ENCODE measurements at regions of chr19 and their contacts with region 1.

Region 1: DNA sequence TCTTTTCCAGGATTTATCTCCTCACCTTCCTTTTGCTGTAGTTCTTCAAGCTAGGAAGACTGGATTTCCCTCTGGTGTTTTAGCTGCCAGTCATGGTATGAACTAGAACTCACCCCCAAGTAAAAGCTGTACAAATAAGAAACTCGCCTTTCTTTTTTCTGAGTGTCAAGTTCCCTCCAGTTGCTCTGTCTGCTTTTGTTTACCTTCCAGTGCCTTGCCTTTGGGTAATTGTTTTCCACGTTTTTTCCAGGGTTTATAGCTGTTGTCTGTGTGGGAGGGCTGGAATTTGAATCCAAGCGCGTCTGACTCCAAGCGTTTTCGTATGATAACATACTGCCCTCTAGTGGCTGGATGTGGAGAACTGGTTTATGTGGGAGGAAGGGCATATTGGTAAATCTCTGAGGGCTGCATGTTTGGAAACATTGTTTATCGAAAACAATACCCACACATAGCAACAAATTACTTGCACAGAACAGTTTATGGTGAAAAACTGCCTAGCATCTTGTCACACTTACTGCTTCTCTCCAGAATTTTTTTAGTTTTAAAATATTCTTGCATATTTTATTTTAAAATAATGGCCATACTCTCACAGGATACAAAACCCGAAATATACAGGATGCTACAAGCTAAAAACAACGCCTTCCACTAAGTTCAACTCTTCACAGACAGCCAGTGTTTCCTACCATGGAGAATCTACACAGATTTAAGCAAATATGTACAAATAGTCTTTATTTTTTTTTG is 19.2 kb downstream of the RCN3 start:
- DNase-seq: peak; percentile 67 to 86
- H3K4me3 ChIP-seq: peak overlapping the region; percentile 32; the same call in 1 of the 2 replicates
- H3K27ac ChIP-seq: no peak overlapping the region
- H3K4me1 ChIP-seq: peaks cover 11% of the 10 kb centered on the region
- H3K27me3 ChIP-seq: 0 out of 2 replicates have a peak, but pooled peaks cover 5% of the 10 kb centered on the region
- CTCF ChIP-seq: peak; percentile 94

Region 2: GRCh38 chr19:49085020-49085867 is 461.8 kb before region 1 on chr19 and contains the start of gene SNRNP70:
- CTCF ChIA-PET with region 1: interaction called, 13 read pairs
- POLR2A ChIA-PET with region 1: no interaction called
- intact Hi-C with region 1: no loop called
- DNase-seq: peak; percentile 97 to 100
- H3K4me3 ChIP-seq: peak within 1 kb of the TSS; percentile 77
- H3K27ac ChIP-seq: peak within 1 kb of the TSS; percentile 41
- H3K4me1 ChIP-seq: peaks cover 15% of the 10 kb centered on the region
- H3K27me3 ChIP-seq: no peaks in the 10 kb centered on the region
- CTCF ChIP-seq: 0 out of 2 replicates have a peak, but pooled peaks have one; percentile 27
- total RNA-seq, gene SNRNP70: 151 and 199 TPM in 2 replicates

Region 3: GRCh38 chr19:49224856-49225255 is 322.1 kb before region 1 on chr19:
- CTCF ChIA-PET with region 1: no interaction called
- POLR2A ChIA-PET with region 1: no interaction called
- intact Hi-C with region 1: loop called (anchors 1 kb)
- DNase-seq: peak; percentile 73 to 84
- H3K4me3 ChIP-seq: no peak overlapping the region
- H3K27ac ChIP-seq: no peak overlapping the region
- H3K4me1 ChIP-seq: no peaks in the 10 kb centered on the region
- H3K27me3 ChIP-seq: no peaks in the 10 kb centered on the region
- CTCF ChIP-seq: peak; percentile 91

Region 4: GRCh38 chr19:49391581-49392399 is 155.2 kb before region 1 on chr19:
- CTCF ChIA-PET with region 1: interaction called, 9 read pairs
- POLR2A ChIA-PET with region 1: no interaction called
- intact Hi-C with region 1: loop called (anchors 2 kb)
- DNase-seq: peak; percentile 61 to 77
- H3K4me3 ChIP-seq: no peak overlapping the region
- H3K27ac ChIP-seq: no peak overlapping the region
- H3K4me1 ChIP-seq: no peaks in the 10 kb centered on the region
- H3K27me3 ChIP-seq: peaks cover 22% of the 10 kb centered on the region
- CTCF ChIP-seq: peak; percentile 95

Region 5: GRCh38 chr19:49502866-49503581 is 44.0 kb before region 1 on chr19:
- CTCF ChIA-PET with region 1: interaction called, 11 read pairs
- POLR2A ChIA-PET with region 1: no interaction called
- intact Hi-C with region 1: loop called (anchors 2 kb)
- DNase-seq: peak in 1 of 2 experiments; percentile 46
- H3K4me3 ChIP-seq: no peak overlapping the region
- H3K27ac ChIP-seq: no peak overlapping the region
- H3K4me1 ChIP-seq: peaks cover 6% of the 10 kb centered on the region
- H3K27me3 ChIP-seq: no peaks in the 10 kb centered on the region
- CTCF ChIP-seq: peak; percentile 79

Region 6: GRCh38 chr19:49560358-49560900 is 13.4 kb after region 1 on chr19:
- CTCF ChIA-PET with region 1: interaction called, 17 read pairs
- POLR2A ChIA-PET with region 1: interaction called, 11 read pairs
- intact Hi-C with region 1: no loop called
- DNase-seq: no peak
- H3K4me3 ChIP-seq: no peak overlapping the region
- H3K27ac ChIP-seq: no peak overlapping the region
- H3K4me1 ChIP-seq: no peaks in the 10 kb centered on the region
- H3K27me3 ChIP-seq: no peaks in the 10 kb centered on the region
- CTCF ChIP-seq: no peak

Region 7: GRCh38 chr19:49766007-49766937 is 219.3 kb after region 1 on chr19:
- CTCF ChIA-PET with region 1: interaction called, 18 read pairs
- POLR2A ChIA-PET with region 1: no interaction called
- intact Hi-C with region 1: no loop called
- DNase-seq: peak; percentile 99
- H3K4me3 ChIP-seq: peak overlapping the region; percentile 59
- H3K27ac ChIP-seq: peak overlapping the region; percentile 88
- H3K4me1 ChIP-seq: peaks cover 17% of the 10 kb centered on the region
- H3K27me3 ChIP-seq: no peaks in the 10 kb centered on the region
- CTCF ChIP-seq: no peak

Measured in PC-9 (cell line).